Mammary epithelial cell (primary cell): ENCODE measurements at regions of chr15 and their contacts with region 1.

Region 1: GRCh38 chr15:77107531-77108355 is 36.8 kb upstream of the TSPAN3 start:
- DNase-seq: no peak
- H3K4me3 ChIP-seq: no peak overlapping the region
- H3K27ac ChIP-seq: no peak overlapping the region
- H3K4me1 ChIP-seq: peaks cover 3% of the 10 kb centered on the region
- H3K27me3 ChIP-seq: no peaks in the 10 kb centered on the region
- CTCF ChIP-seq: peak; percentile 59 to 80

Region 2: GRCh38 chr15:77024271-77025082 is 83.3 kb before region 1 on chr15:
- CTCF ChIA-PET with region 1: no interaction called
- dilution Hi-C with region 1: no loop called
- in situ Hi-C with region 1: no loop called
- intact Hi-C with region 1: loop called (anchors 5 kb)
- DNase-seq: peak; percentile 21
- H3K4me3 ChIP-seq: no peak overlapping the region
- H3K27ac ChIP-seq: no peak overlapping the region
- H3K4me1 ChIP-seq: peaks cover 12% of the 10 kb centered on the region
- H3K27me3 ChIP-seq: no peaks in the 10 kb centered on the region
- CTCF ChIP-seq: peak; percentile 75 to 88

Region 3: GRCh38 chr15:77044228-77045042 is 63.3 kb before region 1 on chr15:
- CTCF ChIA-PET with region 1: no interaction called
- dilution Hi-C with region 1: loop called (anchors 5 kb)
- in situ Hi-C with region 1: no loop called
- intact Hi-C with region 1: no loop called
- DNase-seq: no peak
- H3K4me3 ChIP-seq: no peak overlapping the region
- H3K27ac ChIP-seq: no peak overlapping the region
- H3K4me1 ChIP-seq: no peaks in the 10 kb centered on the region
- H3K27me3 ChIP-seq: no peaks in the 10 kb centered on the region
- CTCF ChIP-seq: no peak

Region 4: DNA sequence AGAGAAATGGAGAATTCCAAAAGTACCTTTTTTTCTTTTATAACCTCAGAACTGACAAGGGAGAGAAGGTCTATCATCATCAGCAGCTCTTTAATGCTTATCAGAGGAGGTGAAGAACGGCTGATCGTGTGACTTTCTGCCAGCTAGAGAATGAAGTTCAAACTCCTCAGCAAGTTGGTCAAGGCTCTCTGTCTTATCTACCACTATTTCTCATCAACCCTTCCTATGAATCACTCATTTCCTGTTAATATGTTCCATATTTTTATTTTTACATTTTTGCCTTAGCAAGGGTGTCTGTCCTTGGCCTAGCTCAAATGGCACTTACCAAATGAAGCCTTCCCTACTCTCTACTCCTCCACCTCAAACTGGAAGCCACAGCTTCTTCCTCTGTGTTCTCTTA is 36.3 kb after region 1 on chr15:
- CTCF ChIA-PET with region 1: no interaction called
- dilution Hi-C with region 1: no loop called
- in situ Hi-C with region 1: no loop called
- intact Hi-C with region 1: no loop called
- DNase-seq: peak; percentile 25
- H3K4me3 ChIP-seq: no peak overlapping the region
- H3K27ac ChIP-seq: peak overlapping the region; percentile 8
- H3K4me1 ChIP-seq: peaks cover 19% of the 10 kb centered on the region
- H3K27me3 ChIP-seq: no peaks in the 10 kb centered on the region
- CTCF ChIP-seq: no peak

Region 5: DNA sequence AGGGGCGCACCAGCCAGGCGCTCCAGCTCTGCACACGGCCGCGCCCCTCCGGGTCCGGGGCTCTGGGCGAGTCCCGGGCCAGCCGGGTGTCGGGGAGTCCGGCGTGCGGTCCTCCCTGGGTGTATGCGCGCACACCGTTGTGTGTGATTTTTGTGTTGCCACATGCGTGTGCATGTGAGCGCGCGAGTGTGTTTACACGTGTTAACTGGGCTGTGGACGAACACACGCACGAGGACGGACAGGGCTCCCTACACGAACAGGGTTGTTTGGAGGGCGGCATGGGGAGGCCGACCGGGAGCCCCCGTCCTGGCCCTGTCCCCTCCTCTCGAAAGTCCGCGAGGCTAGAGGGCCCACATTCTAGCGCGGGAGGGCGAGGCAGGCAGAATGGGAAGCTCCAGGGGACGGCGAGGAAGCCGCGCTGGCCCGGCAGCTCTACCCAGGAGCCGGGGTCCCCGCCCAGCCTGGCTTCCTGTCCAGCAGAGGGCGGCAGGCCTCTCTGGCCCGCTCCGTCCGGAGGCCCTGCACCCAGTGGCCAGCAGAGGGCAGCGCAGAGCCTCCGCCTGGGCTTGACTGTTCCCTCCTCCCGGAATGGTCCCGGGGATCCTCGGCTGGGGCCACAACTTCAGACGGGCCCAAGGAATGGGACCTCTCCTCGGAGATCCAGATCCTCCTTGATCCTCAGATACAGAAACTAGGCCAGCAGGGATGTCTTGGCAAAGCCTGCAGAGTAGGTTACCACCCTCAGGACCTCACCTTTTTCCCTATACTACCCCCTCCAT is 525.6 kb after region 1 on chr15:
- CTCF ChIA-PET with region 1: no interaction called
- dilution Hi-C with region 1: no loop called
- in situ Hi-C with region 1: no loop called
- intact Hi-C with region 1: loop called (anchors 2 kb)
- DNase-seq: peak; percentile 70
- H3K4me3 ChIP-seq: peak overlapping the region; percentile 7 to 43 (median 38)
- H3K27ac ChIP-seq: no peak overlapping the region
- H3K4me1 ChIP-seq: peaks cover 5% of the 10 kb centered on the region
- H3K27me3 ChIP-seq: peaks cover 9% of the 10 kb centered on the region
- CTCF ChIP-seq: peak; percentile 99 to 100